ENCODE measurements at regions of chr12 and their contacts with region 1.

Region 1: GRCh38 chr12:102816816-102817434 is 100.1 kb downstream of the PAH start:
- DNase-seq: peak; percentile 35 to 57 (median 44)
- ATAC-seq: peak; percentile 93
- H3K4me3 ChIP-seq: no peak overlapping the region
- H3K27ac ChIP-seq: no peak overlapping the region
- H3K4me1 ChIP-seq: no peaks in the 10 kb centered on the region
- H3K27me3 ChIP-seq: no peaks in the 10 kb centered on the region
- CTCF ChIP-seq: peak; percentile 47 to 68 (median 64); a peak in 5 of 6 replicates
- EP300 ChIP-seq: no peak
- POLR2A ChIP-seq: no peak
- RAD21 ChIP-seq: peak in 1 of 2 experiments; percentile 44; a peak in 3 of 4 replicates

Region 2: DNA sequence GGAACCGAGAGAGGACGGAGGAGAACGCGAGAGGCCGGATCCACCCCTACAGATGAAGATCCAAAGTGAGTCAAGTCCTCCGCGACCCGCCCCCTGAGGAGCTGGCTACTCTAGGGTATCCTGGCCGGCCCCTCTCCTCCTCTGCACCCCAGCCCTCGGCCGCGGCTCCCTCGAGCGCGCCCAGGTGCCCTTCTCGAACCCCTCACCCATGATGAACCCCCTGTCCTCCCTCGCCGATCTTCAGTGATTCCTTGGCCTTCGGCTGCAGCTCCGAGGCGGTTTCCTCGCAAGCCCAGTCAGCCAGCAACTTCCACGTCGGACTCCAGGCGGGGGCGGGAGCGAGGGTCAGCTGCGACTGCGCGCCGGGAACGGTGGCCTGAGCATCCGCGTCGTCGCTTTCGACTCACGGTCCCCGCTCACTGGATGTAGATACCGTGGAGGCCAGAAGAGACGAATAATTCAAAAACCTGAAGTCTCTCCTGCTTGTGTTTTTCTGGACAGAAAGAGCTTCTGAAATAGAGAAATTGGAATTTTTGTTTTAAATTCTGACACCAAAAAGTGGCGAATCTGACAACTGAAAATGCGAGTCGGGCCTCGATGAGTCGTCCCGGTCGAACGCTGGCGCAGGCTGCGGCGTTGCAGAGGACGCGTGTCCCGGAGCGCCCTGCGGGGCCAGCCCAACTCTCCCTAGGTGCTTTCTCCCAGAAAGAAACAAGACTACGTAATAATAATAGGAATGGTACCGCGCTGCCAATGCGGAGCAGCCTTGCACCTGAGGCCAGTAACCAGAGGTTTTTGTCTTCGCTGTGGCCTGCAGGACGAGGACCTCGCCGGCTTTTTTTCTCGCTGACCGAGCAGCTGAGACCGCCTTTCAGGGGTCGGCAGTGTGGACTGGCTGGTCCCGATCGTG is 1409.2 kb before region 1 on chr12 and contains the start of gene ARL1:
- CTCF ChIA-PET with region 1: no interaction called
- POLR2A ChIA-PET with region 1: no interaction called
- in situ Hi-C with region 1: loop called (anchors 25 kb)
- intact Hi-C with region 1: no loop called
- DNase-seq: peak; percentile 76 to 91 (median 82)
- ATAC-seq: peak; percentile 90
- H3K4me3 ChIP-seq: peak within 1 kb of the TSS; percentile 75
- H3K27ac ChIP-seq: peak within 1 kb of the TSS; percentile 98
- H3K4me1 ChIP-seq: peaks cover 9 to 14% of the 10 kb centered on the region in 2 experiments; a peak in 3 of 5 replicates
- H3K27me3 ChIP-seq: no peaks in the 10 kb centered on the region
- CTCF ChIP-seq: no peak
- EP300 ChIP-seq: peak; percentile 99
- POLR2A ChIP-seq: peak; percentile 92
- RAD21 ChIP-seq: no peak
- polyA plus RNA-seq, gene ARL1: 126 to 127 TPM

Region 3: GRCh38 chr12:102454808-102455760 is 361.8 kb before region 1 on chr12:
- CTCF ChIA-PET with region 1: no interaction called
- POLR2A ChIA-PET with region 1: no interaction called
- in situ Hi-C with region 1: no loop called
- intact Hi-C with region 1: no loop called
- DNase-seq: no peak
- ATAC-seq: no peak
- H3K4me3 ChIP-seq: no peak overlapping the region
- H3K27ac ChIP-seq: no peak overlapping the region
- H3K4me1 ChIP-seq: no peaks in the 10 kb centered on the region
- H3K27me3 ChIP-seq: no peaks in the 10 kb centered on the region
- CTCF ChIP-seq: no peak
- EP300 ChIP-seq: no peak
- POLR2A ChIP-seq: no peak
- RAD21 ChIP-seq: no peak

Region 4: GRCh38 chr12:102757154-102757881 is 59.6 kb before region 1 on chr12:
- CTCF ChIA-PET with region 1: no interaction called
- POLR2A ChIA-PET with region 1: no interaction called
- in situ Hi-C with region 1: no loop called
- intact Hi-C with region 1: no loop called
- DNase-seq: no peak
- ATAC-seq: no peak
- H3K4me3 ChIP-seq: no peak overlapping the region
- H3K27ac ChIP-seq: no peak overlapping the region
- H3K4me1 ChIP-seq: no peaks in the 10 kb centered on the region
- H3K27me3 ChIP-seq: peaks cover 0 to 5% of the 10 kb centered on the region in 2 experiments; a peak in 2 of 5 replicates
- CTCF ChIP-seq: no peak
- EP300 ChIP-seq: no peak
- POLR2A ChIP-seq: no peak
- RAD21 ChIP-seq: no peak

Region 5: GRCh38 chr12:102769319-102769916 is 47.5 kb before region 1 on chr12:
- CTCF ChIA-PET with region 1: no interaction called
- POLR2A ChIA-PET with region 1: no interaction called
- in situ Hi-C with region 1: no loop called
- intact Hi-C with region 1: no loop called
- DNase-seq: peak; percentile 45 to 57 (median 50)
- ATAC-seq: peak; percentile 96
- H3K4me3 ChIP-seq: no peak overlapping the region
- H3K27ac ChIP-seq: no peak overlapping the region
- H3K4me1 ChIP-seq: no peaks in the 10 kb centered on the region
- H3K27me3 ChIP-seq: peaks cover 0 to 3% of the 10 kb centered on the region in 2 experiments; a peak in 1 of 5 replicates
- CTCF ChIP-seq: peak; percentile 63 to 83 (median 68)
- EP300 ChIP-seq: no peak
- POLR2A ChIP-seq: no peak
- RAD21 ChIP-seq: peak; percentile 71 to 78

Region 6: GRCh38 chr12:102876880-102877279 is 60.0 kb after region 1 on chr12:
- CTCF ChIA-PET with region 1: no interaction called
- POLR2A ChIA-PET with region 1: no interaction called
- in situ Hi-C with region 1: no loop called
- intact Hi-C with region 1: no loop called
- DNase-seq: peak in 1 of 4 experiments; percentile 10
- ATAC-seq: peak; percentile 40; the same call in 2 of the 3 replicates
- H3K4me3 ChIP-seq: no peak overlapping the region
- H3K27ac ChIP-seq: no peak overlapping the region
- H3K4me1 ChIP-seq: no peaks in the 10 kb centered on the region
- H3K27me3 ChIP-seq: no peaks in the 10 kb centered on the region
- CTCF ChIP-seq: peak in 1 of 3 experiments; percentile 18; a peak in 1 of 6 replicates
- EP300 ChIP-seq: no peak
- POLR2A ChIP-seq: no peak
- RAD21 ChIP-seq: no peak